ENCODE measurements at regions of chr11 and their contacts with region 1.

Region 1: GRCh38 chr11:65497141-65498041 is 1.5 kb upstream of the MALAT1 start:
- DNase-seq: peak; percentile 95 to 99 (median 98)
- ATAC-seq: peak; percentile 89
- H3K4me3 ChIP-seq: peak overlapping the region; percentile 99
- H3K4me3 Mint-ChIP-seq: no peak overlapping the region
- H3K27ac ChIP-seq: peak overlapping the region; percentile 99
- H3K27ac Mint-ChIP-seq: no peak overlapping the region
- H3K4me1 ChIP-seq: peaks cover 11 to 12% of the 10 kb centered on the region in 2 donors
- H3K4me1 Mint-ChIP-seq: peaks cover 13 to 43% (median 24%) of the 10 kb centered on the region in 7 donors
- H3K27me3 ChIP-seq: no peaks in the 10 kb centered on the region
- H3K27me3 Mint-ChIP-seq: peaks cover 0 to 6% (median 0%) of the 10 kb centered on the region in 5 donors

Region 2: DNA sequence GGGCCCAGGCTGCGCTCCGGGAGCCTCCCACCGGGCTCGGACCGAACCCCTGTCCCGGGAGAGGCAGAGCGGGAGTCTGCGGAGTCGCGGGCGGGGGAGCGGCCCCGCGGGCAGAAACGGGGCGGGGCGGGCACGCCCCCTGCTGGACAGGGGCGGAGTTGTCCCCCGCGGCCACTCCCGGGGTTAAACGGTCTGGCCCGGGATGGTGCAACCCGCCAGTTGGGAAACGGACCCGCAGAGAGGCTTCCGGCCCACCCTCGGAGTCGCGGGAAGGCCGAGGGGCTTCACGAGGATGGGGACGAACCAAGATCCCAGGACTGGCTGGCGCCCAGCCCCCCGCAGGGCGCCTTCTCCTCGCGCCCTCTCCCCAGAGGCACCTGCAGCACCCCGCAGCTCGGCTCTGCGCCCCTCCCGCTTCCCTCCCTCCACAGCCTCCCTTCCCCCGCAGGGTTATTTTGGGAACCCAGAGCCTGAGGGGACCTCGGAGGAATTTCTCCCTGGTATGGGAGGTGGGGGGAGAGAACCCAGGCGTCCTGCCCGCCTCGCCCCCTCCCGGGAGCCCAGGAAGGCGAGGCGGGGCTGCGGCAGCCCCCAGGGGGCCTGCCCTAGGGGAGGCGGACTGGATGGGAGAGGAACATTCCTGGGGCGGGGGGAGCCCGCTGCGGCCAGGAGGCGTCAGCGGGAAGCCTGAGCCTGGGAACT is 754.4 kb before region 1 on chr11:
- CTCF ChIA-PET with region 1: no interaction called
- POLR2A ChIA-PET with region 1: interaction called, 17 read pairs
- intact Hi-C with region 1: no loop called
- DNase-seq: peak; percentile 60 to 91 (median 78)
- ATAC-seq: peak; percentile 45
- H3K4me3 ChIP-seq: peak overlapping the region; percentile 98
- H3K4me3 Mint-ChIP-seq: peak overlapping the region in 9 of 10 donors; percentile 89 to 99 (median 97)
- H3K27ac ChIP-seq: peak overlapping the region; percentile 97
- H3K27ac Mint-ChIP-seq: peak overlapping the region in 5 of 9 donors; percentile 88 to 100 (median 98)
- H3K4me1 ChIP-seq: peaks cover 9 to 16% of the 10 kb centered on the region in 2 donors
- H3K4me1 Mint-ChIP-seq: peaks cover 18 to 47% (median 39%) of the 10 kb centered on the region in 7 donors
- H3K27me3 ChIP-seq: no peaks in the 10 kb centered on the region
- H3K27me3 Mint-ChIP-seq: no peaks in the 10 kb centered on the region

Region 3: DNA sequence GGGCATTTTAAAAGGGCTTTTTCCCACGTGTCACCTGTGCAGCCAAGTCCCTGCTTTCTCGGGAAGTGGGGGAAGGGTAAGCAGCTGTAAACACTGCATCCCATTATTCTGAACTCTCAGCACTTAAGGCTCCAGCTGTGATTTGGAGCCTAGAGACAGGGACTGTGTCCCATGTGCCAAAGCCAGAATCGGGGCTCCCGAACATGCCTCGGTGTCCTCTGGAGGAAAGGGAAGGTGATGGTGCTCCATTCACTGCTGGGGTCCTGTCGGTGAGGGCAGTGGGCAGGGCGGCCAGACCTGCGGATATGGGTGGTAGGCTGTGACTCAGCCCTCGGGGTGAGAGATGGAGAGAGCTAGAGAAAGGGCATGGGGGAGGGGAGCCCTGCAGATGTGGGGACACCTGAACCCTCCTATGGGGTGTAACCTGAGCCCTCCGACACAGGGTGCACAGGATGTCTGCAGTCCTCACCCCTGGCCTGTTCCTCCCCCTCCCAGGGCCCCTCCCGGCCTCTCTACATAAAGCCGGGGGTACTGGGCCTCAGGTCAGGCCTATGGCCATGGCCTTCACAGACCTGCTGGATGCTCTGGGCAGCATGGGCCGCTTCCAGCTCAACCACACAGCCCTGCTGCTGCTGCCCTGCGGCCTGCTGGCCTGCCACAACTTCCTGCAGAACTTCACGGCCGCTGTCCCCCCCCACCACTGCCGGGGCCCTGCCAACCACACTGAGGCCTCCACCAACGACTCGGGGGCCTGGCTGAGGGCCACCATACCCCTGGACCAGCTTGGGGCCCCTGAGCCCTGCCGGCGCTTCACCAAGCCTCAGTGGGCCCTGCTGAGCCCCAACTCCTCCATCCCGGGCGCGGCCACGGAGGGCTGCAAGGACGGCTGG is 283.8 kb before region 1 on chr11:
- CTCF ChIA-PET with region 1: no interaction called
- POLR2A ChIA-PET with region 1: no interaction called
- intact Hi-C with region 1: no loop called
- DNase-seq: peak in 2 of 9 donors; percentile 9 to 19
- ATAC-seq: peak; percentile 62
- H3K4me3 ChIP-seq: no peak overlapping the region
- H3K4me3 Mint-ChIP-seq: peak overlapping the region in 5 of 10 donors; percentile 8 to 52 (median 29)
- H3K27ac ChIP-seq: no peak overlapping the region
- H3K27ac Mint-ChIP-seq: peak overlapping the region in 5 of 9 donors; percentile 1 to 67 (median 46)
- H3K4me1 ChIP-seq: peaks cover 7 to 8% of the 10 kb centered on the region in 2 donors
- H3K4me1 Mint-ChIP-seq: peaks cover 13 to 36% (median 23%) of the 10 kb centered on the region in 7 donors
- H3K27me3 ChIP-seq: no peaks in the 10 kb centered on the region
- H3K27me3 Mint-ChIP-seq: no peaks in the 10 kb centered on the region

Region 4: GRCh38 chr11:65261591-65262380 is 235.6 kb before region 1 on chr11 and contains the start of gene POLA2:
- CTCF ChIA-PET with region 1: no interaction called
- POLR2A ChIA-PET with region 1: interaction called, 14 read pairs
- intact Hi-C with region 1: no loop called
- DNase-seq: peak; percentile 94 to 99 (median 98)
- ATAC-seq: peak; percentile 96
- H3K4me3 ChIP-seq: peak within 1 kb of the TSS; percentile 88
- H3K4me3 Mint-ChIP-seq: peak within 1 kb of the TSS; percentile 83 to 95 (median 92)
- H3K27ac ChIP-seq: peak within 1 kb of the TSS; percentile 88
- H3K27ac Mint-ChIP-seq: peak within 1 kb of the TSS; percentile 91 to 98 (median 97)
- H3K4me1 ChIP-seq: peaks cover 9 to 18% of the 10 kb centered on the region in 2 donors
- H3K4me1 Mint-ChIP-seq: peaks cover 20 to 62% (median 50%) of the 10 kb centered on the region in 7 donors
- H3K27me3 ChIP-seq: no peaks in the 10 kb centered on the region
- H3K27me3 Mint-ChIP-seq: peaks cover 0 to 2% (median 0%) of the 10 kb centered on the region in 5 donors
- total RNA-seq, gene POLA2: 13.4 to 51.6 (median 27.8) TPM

Region 5: DNA sequence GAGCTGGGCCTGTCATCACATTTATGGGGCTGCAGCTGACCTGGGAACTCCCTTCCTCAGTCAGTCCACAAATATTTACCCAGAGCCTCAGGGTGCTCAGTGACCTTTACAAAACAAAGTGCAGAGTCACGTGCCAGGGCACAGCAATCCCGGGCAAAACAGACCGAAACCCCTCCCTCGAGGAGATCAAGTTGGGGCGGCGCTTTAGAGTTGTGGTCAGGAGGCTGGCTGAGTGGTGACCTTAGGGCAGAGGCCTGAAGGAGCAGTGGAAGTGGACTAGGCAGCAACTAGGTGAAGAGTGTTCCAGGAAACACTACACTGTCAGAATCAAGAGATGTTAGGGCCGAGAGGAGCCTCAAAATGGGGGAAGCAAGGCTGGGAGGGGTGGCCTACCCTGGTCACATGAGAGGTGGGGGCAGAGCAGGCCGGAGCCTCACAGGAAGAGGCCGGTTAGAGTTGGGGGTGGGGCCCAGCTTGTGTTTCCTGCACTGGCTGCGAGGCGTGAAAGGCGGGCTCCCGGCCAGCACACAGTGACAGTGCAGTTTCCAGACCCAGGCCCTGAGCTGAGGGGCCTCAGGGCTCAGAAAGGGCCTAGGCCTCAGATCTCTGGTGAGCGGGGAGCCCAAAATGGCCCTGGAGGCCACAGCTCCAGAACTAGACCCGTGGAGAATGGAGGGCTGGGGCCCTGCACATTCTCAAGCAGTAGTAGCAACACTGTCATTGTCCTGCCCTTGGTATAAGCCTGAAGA is 78.5 kb before region 1 on chr11:
- CTCF ChIA-PET with region 1: interaction called, 68 read pairs
- POLR2A ChIA-PET with region 1: interaction called, 2,591 read pairs
- intact Hi-C with region 1: loop called (anchors 1 kb)
- DNase-seq: peak; percentile 33 to 89 (median 48)
- ATAC-seq: peak; percentile 51
- H3K4me3 ChIP-seq: peak overlapping the region; percentile 82
- H3K4me3 Mint-ChIP-seq: peak overlapping the region; percentile 92 to 100 (median 97)
- H3K27ac ChIP-seq: peak overlapping the region; percentile 98
- H3K27ac Mint-ChIP-seq: peak overlapping the region; percentile 97 to 100 (median 99)
- H3K4me1 ChIP-seq: peaks cover 36 to 46% of the 10 kb centered on the region in 2 donors
- H3K4me1 Mint-ChIP-seq: peaks cover 36 to 65% (median 45%) of the 10 kb centered on the region in 7 donors
- H3K27me3 ChIP-seq: no peaks in the 10 kb centered on the region
- H3K27me3 Mint-ChIP-seq: peaks cover 0 to 15% (median 0%) of the 10 kb centered on the region in 5 donors

Region 6: DNA sequence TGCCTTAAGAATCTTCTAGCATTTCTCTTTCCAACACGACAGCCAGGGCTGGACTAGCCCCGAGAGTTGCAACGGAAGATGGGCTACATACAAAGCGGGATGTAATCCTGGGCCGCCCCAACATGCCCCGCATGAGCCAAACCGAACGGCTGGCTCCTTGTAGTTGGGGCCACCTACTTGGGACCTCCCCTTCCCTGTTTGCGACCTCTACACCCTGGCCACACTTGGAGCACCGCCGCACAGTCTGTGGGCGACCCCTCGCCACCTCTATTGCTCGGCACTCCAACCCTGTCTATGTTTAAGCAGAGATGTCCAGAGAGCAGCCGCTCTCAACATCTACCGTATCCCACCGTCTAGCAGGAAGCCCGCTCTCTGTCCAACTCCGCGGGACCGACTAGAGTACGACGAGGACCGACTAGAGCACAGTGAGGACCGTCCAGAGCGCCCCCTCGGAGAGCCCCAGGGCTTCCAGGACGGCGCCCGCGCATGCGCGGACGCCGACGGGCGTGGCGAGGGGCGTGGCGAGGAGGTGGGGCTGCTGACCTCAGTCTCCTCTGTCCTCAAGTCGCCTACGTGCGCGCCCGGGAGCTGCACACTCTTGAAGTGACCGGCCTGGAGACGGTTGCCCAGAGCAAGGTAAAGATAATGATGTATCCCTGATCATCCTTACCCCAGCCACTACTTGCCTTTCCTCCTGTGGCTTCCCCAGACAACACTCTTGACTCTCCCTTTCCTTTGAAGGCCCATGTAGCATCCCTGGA is 42.5 kb before region 1 on chr11:
- CTCF ChIA-PET with region 1: no interaction called
- POLR2A ChIA-PET with region 1: interaction called, 9 read pairs
- intact Hi-C with region 1: loop called in 1 of 2 experiments (anchors 1 kb)
- DNase-seq: peak; percentile 48 to 89 (median 61)
- ATAC-seq: peak; percentile 92
- H3K4me3 ChIP-seq: peak overlapping the region; percentile 89
- H3K4me3 Mint-ChIP-seq: peak overlapping the region; percentile 86 to 95 (median 88)
- H3K27ac ChIP-seq: peak overlapping the region; percentile 70
- H3K27ac Mint-ChIP-seq: peak overlapping the region; percentile 14 to 92 (median 85)
- H3K4me1 ChIP-seq: peaks cover 5% of the 10 kb centered on the region in 2 donors
- H3K4me1 Mint-ChIP-seq: peaks cover 14 to 37% (median 21%) of the 10 kb centered on the region in 7 donors
- H3K27me3 ChIP-seq: no peaks in the 10 kb centered on the region
- H3K27me3 Mint-ChIP-seq: no peaks in the 10 kb centered on the region

Region 7: GRCh38 chr11:65540297-65541092 is 43.1 kb after region 1 on chr11:
- CTCF ChIA-PET with region 1: no interaction called
- POLR2A ChIA-PET with region 1: interaction called, 19 read pairs
- intact Hi-C with region 1: loop called in 1 of 2 experiments (anchors 1 kb)
- DNase-seq: peak; percentile 84 to 95 (median 91)
- ATAC-seq: peak; percentile 94
- H3K4me3 ChIP-seq: peak overlapping the region; percentile 71
- H3K4me3 Mint-ChIP-seq: peak overlapping the region; percentile 81 to 90 (median 84)
- H3K27ac ChIP-seq: peak overlapping the region; percentile 74
- H3K27ac Mint-ChIP-seq: peak overlapping the region in 8 of 9 donors; percentile 70 to 92 (median 86)
- H3K4me1 ChIP-seq: peaks cover 12 to 18% of the 10 kb centered on the region in 2 donors
- H3K4me1 Mint-ChIP-seq: peaks cover 13 to 32% (median 22%) of the 10 kb centered on the region in 7 donors
- H3K27me3 ChIP-seq: no peaks in the 10 kb centered on the region
- H3K27me3 Mint-ChIP-seq: no peaks in the 10 kb centered on the region

Region 8: DNA sequence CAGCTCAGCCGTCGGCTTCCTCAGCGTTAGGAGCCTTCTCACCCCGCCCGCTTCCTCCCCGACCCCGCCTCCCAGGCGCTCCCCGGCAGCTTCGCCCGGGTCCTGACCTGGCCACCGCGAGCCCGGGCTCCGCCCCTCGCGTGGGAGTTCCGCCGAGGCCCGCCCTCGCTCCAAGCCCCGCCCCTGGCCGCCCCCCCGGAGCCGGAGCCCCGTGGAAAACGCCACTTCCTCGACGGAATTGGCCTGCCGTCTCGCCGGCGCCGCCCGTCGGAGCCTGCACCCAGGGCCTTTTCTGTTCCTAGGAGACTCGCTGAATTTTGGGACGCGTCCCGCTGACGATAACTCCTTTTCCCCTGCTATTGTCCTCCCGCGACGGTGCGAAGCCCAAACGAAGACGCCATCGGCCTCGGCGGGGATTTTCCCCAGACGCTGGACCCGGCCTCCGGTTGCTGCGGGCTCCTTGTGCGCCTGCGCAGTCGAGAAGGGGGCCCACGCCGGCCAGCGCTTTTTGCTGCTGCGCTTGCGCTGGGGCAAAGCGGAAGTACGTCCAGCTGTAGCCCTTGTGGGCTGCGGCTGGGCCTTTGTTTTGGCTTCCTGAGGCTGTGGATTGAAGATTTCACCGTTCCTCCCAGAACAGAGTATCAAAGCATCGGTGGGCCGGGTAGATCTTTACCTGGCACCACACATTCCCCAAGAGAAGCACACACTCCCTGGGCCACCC is 155.3 kb after region 1 on chr11:
- CTCF ChIA-PET with region 1: no interaction called
- POLR2A ChIA-PET with region 1: interaction called, 16 read pairs
- intact Hi-C with region 1: no loop called
- DNase-seq: peak; percentile 91 to 99 (median 95)
- ATAC-seq: peak; percentile 92
- H3K4me3 ChIP-seq: peak overlapping the region; percentile 58
- H3K4me3 Mint-ChIP-seq: peak overlapping the region; percentile 70 to 95 (median 90)
- H3K27ac ChIP-seq: peak overlapping the region; percentile 98
- H3K27ac Mint-ChIP-seq: peak overlapping the region; percentile 90 to 99 (median 98)
- H3K4me1 ChIP-seq: peaks cover 25% of the 10 kb centered on the region in 2 donors
- H3K4me1 Mint-ChIP-seq: peaks cover 36 to 59% (median 51%) of the 10 kb centered on the region in 7 donors
- H3K27me3 ChIP-seq: no peaks in the 10 kb centered on the region
- H3K27me3 Mint-ChIP-seq: no peaks in the 10 kb centered on the region

Measured in naive thymus-derived CD4-positive, alpha-beta T cell (primary cell).